A673 (cell line): ENCODE measurements at regions of chrX and their contacts with region 1.

Region 1: DNA sequence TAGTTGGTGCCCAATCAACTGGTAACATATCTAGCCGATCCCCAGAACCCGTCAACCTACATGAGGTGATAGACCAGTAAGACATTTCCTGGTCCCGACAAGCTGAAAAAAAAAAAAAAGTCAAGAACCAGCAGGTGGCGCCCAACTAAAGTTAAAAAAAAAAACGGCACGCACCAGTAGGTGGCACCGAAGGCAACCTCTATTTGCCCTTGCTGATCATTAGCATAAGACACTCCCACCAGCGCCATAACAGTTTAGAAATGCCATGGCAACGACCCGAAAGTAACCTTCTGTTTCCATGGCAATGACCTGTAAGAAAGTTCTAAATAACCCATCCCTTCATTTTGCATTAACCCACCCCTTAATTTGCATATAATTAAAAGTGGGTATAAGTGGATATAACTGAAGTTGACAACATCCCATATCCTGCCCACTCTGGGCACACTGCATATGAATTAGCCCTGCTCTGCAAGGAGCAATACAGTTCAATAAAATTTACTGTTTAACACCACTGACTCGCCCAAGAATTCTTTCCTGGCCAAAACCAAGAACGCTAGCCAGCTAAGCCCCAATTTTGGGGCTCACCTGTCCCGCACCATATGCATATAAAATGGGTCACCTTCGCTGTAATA is 83.9 kb upstream of the SPANXB1 start:
- DNase-seq: peak; percentile 80
- H3K4me3 ChIP-seq: no peak overlapping the region
- H3K27ac ChIP-seq: no peak overlapping the region
- H3K4me1 ChIP-seq: no peaks in the 10 kb centered on the region
- H3K27me3 ChIP-seq: no peaks in the 10 kb centered on the region
- CTCF ChIP-seq: peak; percentile 90

Region 2: DNA sequence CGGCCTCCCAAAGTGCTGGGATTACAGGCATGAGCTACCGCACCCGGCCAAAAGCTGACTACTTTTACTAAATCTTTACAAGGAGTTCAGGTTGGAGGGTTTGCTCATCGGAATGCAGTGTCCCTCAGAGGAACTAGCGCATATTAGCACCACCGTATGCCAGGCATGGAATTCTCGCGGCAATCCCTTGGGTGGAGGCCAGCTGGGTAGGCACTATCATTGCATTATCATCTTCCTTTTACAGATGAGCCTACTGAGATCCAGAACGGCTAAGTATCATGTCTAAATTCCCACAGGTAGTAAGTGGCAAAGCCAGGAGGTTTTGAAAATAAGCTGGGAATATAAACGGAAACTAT is 947.2 kb before region 1 on chrX:
- CTCF ChIA-PET with region 1: no interaction called
- POLR2A ChIA-PET with region 1: no interaction called
- intact Hi-C with region 1: no loop called
- DNase-seq: peak; percentile 92
- H3K4me3 ChIP-seq: peak overlapping the region; percentile 32
- H3K27ac ChIP-seq: peak overlapping the region; percentile 95
- H3K4me1 ChIP-seq: peaks cover 42% of the 10 kb centered on the region
- H3K27me3 ChIP-seq: no peaks in the 10 kb centered on the region
- CTCF ChIP-seq: no peak

Region 3: GRCh38 chrX:141278302-141278701 is 359.8 kb after region 1 on chrX:
- CTCF ChIA-PET with region 1: no interaction called
- POLR2A ChIA-PET with region 1: no interaction called
- intact Hi-C with region 1: loop called (anchors 5 kb)
- DNase-seq: peak; percentile 39
- H3K4me3 ChIP-seq: no peak overlapping the region
- H3K27ac ChIP-seq: no peak overlapping the region
- H3K4me1 ChIP-seq: no peaks in the 10 kb centered on the region
- H3K27me3 ChIP-seq: no peaks in the 10 kb centered on the region
- CTCF ChIP-seq: peak; percentile 65